Prostate gland (tissue), 2 donors: ENCODE measurements at regions of chr11 and their contacts with region 1.

Region 1: GRCh38 chr11:107017433-107018227 is 646 bp downstream of the GUCY1A2 start:
- DNase-seq: peak; percentile 27
- H3K4me3 ChIP-seq: peak overlapping the region; percentile 36 to 45
- H3K27ac ChIP-seq: peak overlapping the region in 1 of 2 donors; percentile 50
- H3K4me1 ChIP-seq: no peaks in the 10 kb centered on the region
- H3K27me3 ChIP-seq: no peaks in the 10 kb centered on the region
- CTCF ChIP-seq: peak in 2 of 4 experiments; percentile 46 to 55
- POLR2A ChIP-seq: no peak

Region 2: DNA sequence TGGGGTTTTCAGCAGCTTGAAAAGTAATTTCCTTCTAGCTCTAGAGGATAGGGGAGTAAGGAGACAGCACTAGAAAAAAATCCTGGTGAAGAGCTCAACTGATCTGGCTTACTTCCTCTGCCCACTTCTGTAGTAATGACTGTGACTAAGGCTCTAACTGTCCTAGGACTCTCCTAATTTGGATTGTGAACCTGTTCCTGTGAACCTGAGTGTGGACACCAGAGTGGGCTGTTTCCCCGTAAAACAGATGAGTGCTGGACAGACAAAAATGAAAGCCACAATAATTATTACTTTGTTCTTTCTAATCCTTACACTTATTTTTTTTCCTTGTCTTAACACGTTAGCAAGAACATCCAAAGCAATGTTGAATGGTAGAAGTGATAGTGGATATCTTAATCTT is 786.0 kb before region 1 on chr11:
- intact Hi-C with region 1: loop called (anchors 5 kb)
- DNase-seq: no peak
- H3K4me3 ChIP-seq: no peak overlapping the region
- H3K27ac ChIP-seq: no peak overlapping the region
- H3K4me1 ChIP-seq: no peaks in the 10 kb centered on the region
- H3K27me3 ChIP-seq: no peaks in the 10 kb centered on the region
- CTCF ChIP-seq: peak in 2 of 4 experiments; percentile 8 to 15
- POLR2A ChIP-seq: no peak

Region 3: DNA sequence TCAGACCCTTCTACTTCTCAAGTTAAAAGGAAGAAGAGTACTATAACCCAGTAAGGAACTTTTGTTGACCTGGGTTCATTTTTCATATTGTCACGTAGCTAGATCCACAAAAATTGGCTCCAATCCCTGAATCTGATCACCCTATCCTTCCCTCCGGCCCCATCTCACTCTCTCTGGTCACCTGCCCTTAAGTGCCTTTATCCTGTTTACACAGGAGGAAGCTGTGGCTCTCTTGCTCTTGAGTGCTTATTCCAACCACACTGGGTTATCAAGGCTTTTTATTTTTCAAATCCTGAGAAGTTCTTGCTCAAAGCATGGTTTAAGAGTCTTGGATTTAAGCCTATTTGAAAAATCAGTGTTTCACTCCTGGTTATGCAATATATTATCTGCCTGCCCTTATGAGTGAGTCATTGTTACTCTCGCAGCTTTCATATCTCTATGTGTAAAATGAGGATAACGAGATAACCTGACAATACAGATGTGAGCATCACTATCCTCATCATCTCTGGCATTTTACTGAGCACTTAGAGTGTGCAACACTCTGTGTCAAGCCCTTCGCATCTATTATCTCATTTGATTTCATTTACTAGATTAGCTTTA is 293.2 kb before region 1 on chr11:
- intact Hi-C with region 1: loop called (anchors 5 kb)
- DNase-seq: no peak
- H3K4me3 ChIP-seq: no peak overlapping the region
- H3K27ac ChIP-seq: no peak overlapping the region
- H3K4me1 ChIP-seq: no peaks in the 10 kb centered on the region
- H3K27me3 ChIP-seq: peaks cover 1% of the 10 kb centered on the region
- CTCF ChIP-seq: no peak
- POLR2A ChIP-seq: no peak

Region 4: GRCh38 chr11:106974831-106975230 is 42.8 kb before region 1 on chr11:
- intact Hi-C with region 1: loop called (anchors 5 kb)
- DNase-seq: no peak
- H3K4me3 ChIP-seq: no peak overlapping the region
- H3K27ac ChIP-seq: no peak overlapping the region
- H3K4me1 ChIP-seq: no peaks in the 10 kb centered on the region
- H3K27me3 ChIP-seq: no peaks in the 10 kb centered on the region
- CTCF ChIP-seq: no peak
- POLR2A ChIP-seq: no peak

Region 5: DNA sequence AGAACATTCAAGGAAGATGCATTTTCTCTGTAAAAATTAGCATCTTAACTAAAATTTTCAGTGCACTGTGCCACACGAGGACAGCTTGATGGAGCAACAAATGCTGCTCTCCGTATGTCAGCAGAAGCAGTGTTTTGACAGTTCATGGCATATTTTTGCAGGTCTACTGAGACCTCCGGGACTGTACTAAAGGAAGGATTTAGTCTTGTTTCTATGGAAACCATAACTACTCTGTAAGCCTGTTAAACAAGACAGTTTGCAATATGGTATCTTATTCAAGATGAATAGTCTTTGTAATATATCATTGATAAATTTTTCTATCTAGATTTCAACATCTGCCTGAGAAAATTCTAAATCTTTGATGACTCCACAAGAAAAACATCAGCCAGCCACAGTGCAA is 184.6 kb after region 1 on chr11:
- intact Hi-C with region 1: no loop called
- DNase-seq: no peak
- H3K4me3 ChIP-seq: no peak overlapping the region
- H3K27ac ChIP-seq: no peak overlapping the region
- H3K4me1 ChIP-seq: no peaks in the 10 kb centered on the region
- H3K27me3 ChIP-seq: no peaks in the 10 kb centered on the region
- CTCF ChIP-seq: no peak
- POLR2A ChIP-seq: no peak